Naive thymus-derived CD4-positive, alpha-beta T cell (primary cell): ENCODE measurements at regions of chr5 and their contacts with region 1.

Region 1: DNA sequence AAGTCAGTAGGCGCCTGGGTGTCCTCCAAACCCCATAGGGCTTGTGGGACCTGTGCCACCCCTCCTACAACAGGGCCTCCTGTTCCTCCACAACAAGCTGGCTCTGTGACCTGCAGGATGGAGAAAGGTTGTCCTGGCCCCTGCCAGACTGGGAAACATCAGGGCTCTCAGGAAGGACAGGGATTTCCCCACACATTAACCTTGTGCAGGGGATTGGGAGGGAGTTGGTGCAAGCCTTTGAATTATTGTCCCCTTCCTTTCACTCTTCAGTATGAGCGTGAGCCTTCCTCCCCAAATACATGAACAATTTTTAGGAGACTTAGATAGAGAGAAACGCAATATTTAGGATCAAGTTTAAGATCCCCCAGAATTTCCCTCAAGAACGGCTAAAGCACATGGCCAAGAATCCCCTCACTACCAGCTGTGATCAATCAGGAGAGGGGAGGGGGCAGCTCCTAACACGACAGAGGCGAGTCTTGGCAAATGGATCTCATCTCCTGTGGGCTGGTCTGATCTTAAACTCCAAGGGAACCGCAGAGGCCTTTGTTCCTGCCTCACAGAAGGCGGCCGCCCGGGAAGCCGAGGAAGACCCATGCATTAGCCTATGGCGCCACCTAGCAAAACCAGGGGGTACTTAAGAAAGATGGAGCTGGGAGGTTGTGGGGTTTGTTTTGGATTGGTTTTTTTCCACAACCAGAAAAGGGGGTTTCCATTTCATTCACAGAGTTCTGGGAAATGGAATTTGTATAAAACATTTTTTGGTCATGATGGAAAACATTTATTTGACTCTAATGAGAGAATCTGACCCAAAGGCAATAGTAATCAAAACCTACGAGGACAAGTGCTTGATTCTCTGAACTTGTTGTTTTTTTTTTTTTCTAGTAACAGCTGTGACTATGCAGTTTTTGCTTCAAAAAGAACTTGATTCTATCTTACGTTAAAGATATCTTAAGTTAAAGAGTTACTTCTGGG is 36.1 kb upstream of the OSMR start:
- DNase-seq: peak in 7 of 9 donors; percentile 8 to 52 (median 22)
- ATAC-seq: no peak
- H3K4me3 ChIP-seq: no peak overlapping the region
- H3K4me3 Mint-ChIP-seq: peak overlapping the region in 1 of 10 donors; percentile 7
- H3K27ac ChIP-seq: no peak overlapping the region
- H3K27ac Mint-ChIP-seq: no peak overlapping the region
- H3K4me1 ChIP-seq: no peaks in the 10 kb centered on the region
- H3K4me1 Mint-ChIP-seq: peaks cover 0 to 9% (median 0%) of the 10 kb centered on the region in 7 donors
- H3K27me3 ChIP-seq: no peaks in the 10 kb centered on the region
- H3K27me3 Mint-ChIP-seq: peaks cover 21 to 62% (median 49%) of the 10 kb centered on the region in 5 donors

Region 2: GRCh38 chr5:38265546-38266179 is 544.0 kb before region 1 on chr5:
- CTCF ChIA-PET with region 1: no interaction called
- POLR2A ChIA-PET with region 1: no interaction called
- intact Hi-C with region 1: loop called in 1 of 2 experiments (anchors 2 kb)
- DNase-seq: peak in 7 of 9 donors; percentile 18 to 57 (median 46)
- ATAC-seq: peak; percentile 62
- H3K4me3 ChIP-seq: no peak overlapping the region
- H3K4me3 Mint-ChIP-seq: no peak overlapping the region
- H3K27ac ChIP-seq: no peak overlapping the region
- H3K27ac Mint-ChIP-seq: no peak overlapping the region
- H3K4me1 ChIP-seq: no peaks in the 10 kb centered on the region
- H3K4me1 Mint-ChIP-seq: no peaks in the 10 kb centered on the region
- H3K27me3 ChIP-seq: peaks cover 0 to 4% of the 10 kb centered on the region in 2 donors
- H3K27me3 Mint-ChIP-seq: peaks cover 35 to 72% (median 64%) of the 10 kb centered on the region in 5 donors

Region 3: DNA sequence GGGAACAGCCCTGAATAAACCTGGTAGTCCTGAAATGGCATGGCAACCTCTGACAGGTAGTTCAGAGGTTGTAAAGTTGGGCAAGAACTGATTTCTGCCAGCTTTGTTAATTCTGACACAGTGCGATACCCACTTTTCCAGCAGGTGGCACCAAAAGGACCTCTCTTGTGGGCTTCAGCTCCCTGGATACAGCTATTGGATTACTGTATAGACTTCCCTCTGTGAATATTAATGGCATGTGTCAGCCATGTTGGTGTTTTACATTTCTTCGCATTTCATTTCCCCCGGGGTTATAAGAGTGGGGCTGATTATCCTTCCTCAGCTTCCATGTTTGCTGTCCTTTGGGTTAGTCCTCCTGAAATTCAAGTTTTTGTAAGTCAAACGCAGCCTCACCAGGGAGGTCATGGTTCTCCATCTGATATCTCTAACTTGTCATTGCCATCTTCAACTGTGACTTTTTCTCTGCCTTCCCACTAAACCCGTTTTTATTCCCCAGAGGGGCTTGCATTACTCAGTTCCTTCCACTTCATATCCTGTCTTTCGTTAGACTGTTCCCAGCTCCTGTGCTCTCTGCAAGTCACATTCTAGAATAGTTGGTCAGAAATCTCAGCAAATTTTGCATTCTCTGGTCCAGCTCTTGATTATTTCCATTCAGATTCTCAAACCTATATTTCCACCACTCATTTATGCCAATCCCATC is 388.8 kb before region 1 on chr5:
- CTCF ChIA-PET with region 1: no interaction called
- POLR2A ChIA-PET with region 1: no interaction called
- intact Hi-C with region 1: loop called (anchors 1 to 5 kb)
- DNase-seq: peak in 3 of 9 donors; percentile 4 to 18 (median 11)
- ATAC-seq: peak; percentile 42
- H3K4me3 ChIP-seq: no peak overlapping the region
- H3K4me3 Mint-ChIP-seq: no peak overlapping the region
- H3K27ac ChIP-seq: no peak overlapping the region
- H3K27ac Mint-ChIP-seq: no peak overlapping the region
- H3K4me1 ChIP-seq: no peaks in the 10 kb centered on the region
- H3K4me1 Mint-ChIP-seq: peaks cover 0 to 1% (median 0%) of the 10 kb centered on the region in 7 donors
- H3K27me3 ChIP-seq: no peaks in the 10 kb centered on the region
- H3K27me3 Mint-ChIP-seq: peaks cover 24 to 42% (median 36%) of the 10 kb centered on the region in 5 donors